GM10248 (cell line): ENCODE measurements at regions of chr16 and their contacts with region 1.

Region 1: GRCh38 chr16:87968541-87968940 is 17.3 kb downstream of the BANP start:
- DNase-seq: no peak
- CTCF ChIP-seq: no peak

Region 2: GRCh38 chr16:87778830-87779579 is 189.5 kb before region 1 on chr16:
- CTCF ChIA-PET with region 1: no interaction called
- POLR2A ChIA-PET with region 1: no interaction called
- DNase-seq: peak; percentile 84
- CTCF ChIP-seq: peak; percentile 98

Region 3: GRCh38 chr16:87956365-87957231 is 11.9 kb before region 1 on chr16:
- CTCF ChIA-PET with region 1: interaction called, 11 read pairs
- POLR2A ChIA-PET with region 1: no interaction called
- DNase-seq: peak; percentile 79
- CTCF ChIP-seq: peak; percentile 59